ENCODE measurements at regions of chr16 and their contacts with region 1.

Region 1: DNA sequence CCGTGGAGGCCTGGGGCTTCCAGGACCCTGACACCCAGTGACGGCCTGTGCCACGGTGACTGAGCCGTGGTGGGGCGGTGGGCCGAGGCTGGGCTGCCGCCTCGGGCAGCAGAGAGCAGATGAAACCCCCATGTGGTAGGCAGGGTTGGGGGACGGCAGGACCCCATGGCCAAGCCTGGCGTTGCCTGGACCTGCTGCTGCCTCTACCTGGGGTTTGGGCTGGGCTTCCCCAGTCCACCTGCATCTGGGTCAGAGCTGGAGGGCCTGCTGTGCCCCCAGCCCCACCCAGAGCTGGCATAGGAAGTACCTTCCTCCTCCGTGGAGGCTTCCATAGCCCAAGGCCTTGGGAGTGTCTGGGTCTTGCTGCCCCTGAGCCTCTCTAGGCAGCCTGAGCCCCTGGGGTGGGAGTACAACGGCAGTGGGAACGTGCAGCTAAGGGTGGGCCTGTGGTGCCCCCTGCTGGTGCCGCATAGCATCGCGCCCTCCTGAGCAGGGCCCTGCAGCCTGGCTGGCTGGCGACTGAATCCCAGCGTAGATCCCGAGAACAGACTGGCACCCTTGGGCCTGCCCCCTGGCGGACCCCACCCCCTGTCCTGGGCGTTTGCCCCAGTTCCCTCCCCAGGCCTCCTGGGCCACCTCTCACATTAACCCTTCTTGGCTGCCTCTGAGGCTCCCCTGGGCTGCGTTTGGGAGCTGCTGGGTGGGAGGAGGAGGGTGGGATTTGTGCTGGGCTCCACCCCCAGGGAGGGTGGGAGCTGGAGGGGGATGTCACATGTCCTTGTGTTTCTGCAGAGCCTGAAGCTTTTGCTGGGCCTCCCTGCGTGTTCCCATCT is 12.6 kb upstream of the ATP6V0C start:
- DNase-seq: peak; percentile 93
- ATAC-seq: peak; percentile 91
- H3K4me3 Mint-ChIP-seq: peak overlapping the region; percentile 49
- H3K27ac Mint-ChIP-seq: no peak overlapping the region
- H3K4me1 Mint-ChIP-seq: peaks cover 4% of the 10 kb centered on the region
- H3K27me3 Mint-ChIP-seq: no peaks in the 10 kb centered on the region
- CTCF ChIP-seq: peak; percentile 94

Region 2: GRCh38 chr16:2251483-2252240 is 249.5 kb before region 1 on chr16 and contains the start of gene ECI1:
- CTCF ChIA-PET with region 1: interaction called, 18 read pairs
- POLR2A ChIA-PET with region 1: interaction called, 5 read pairs
- DNase-seq: peak; percentile 94
- ATAC-seq: peak; percentile 93
- H3K4me3 Mint-ChIP-seq: peak within 1 kb of the TSS; percentile 92
- H3K27ac Mint-ChIP-seq: peak within 1 kb of the TSS; percentile 98
- H3K4me1 Mint-ChIP-seq: peaks cover 9% of the 10 kb centered on the region
- H3K27me3 Mint-ChIP-seq: no peaks in the 10 kb centered on the region
- CTCF ChIP-seq: peak; percentile 13; the same call in 1 of the 2 replicates
- total RNA-seq, gene ECI1: 100 to 110 TPM (median 106 TPM) in 3 replicates

Region 3: GRCh38 chr16:2429034-2429770 is 71.9 kb before region 1 on chr16 and contains the start of gene CCNF:
- CTCF ChIA-PET with region 1: interaction called, 32 read pairs
- POLR2A ChIA-PET with region 1: no interaction called
- DNase-seq: peak; percentile 99
- ATAC-seq: peak; percentile 92
- H3K4me3 Mint-ChIP-seq: peak within 1 kb of the TSS; percentile 99
- H3K27ac Mint-ChIP-seq: peak within 1 kb of the TSS; percentile 40
- H3K4me1 Mint-ChIP-seq: peaks cover 23% of the 10 kb centered on the region
- H3K27me3 Mint-ChIP-seq: peaks cover 11% of the 10 kb centered on the region
- CTCF ChIP-seq: no peak
- total RNA-seq, gene CCNF: 53.5 to 65.7 TPM (median 54.7 TPM) in 3 replicates

Region 4: DNA sequence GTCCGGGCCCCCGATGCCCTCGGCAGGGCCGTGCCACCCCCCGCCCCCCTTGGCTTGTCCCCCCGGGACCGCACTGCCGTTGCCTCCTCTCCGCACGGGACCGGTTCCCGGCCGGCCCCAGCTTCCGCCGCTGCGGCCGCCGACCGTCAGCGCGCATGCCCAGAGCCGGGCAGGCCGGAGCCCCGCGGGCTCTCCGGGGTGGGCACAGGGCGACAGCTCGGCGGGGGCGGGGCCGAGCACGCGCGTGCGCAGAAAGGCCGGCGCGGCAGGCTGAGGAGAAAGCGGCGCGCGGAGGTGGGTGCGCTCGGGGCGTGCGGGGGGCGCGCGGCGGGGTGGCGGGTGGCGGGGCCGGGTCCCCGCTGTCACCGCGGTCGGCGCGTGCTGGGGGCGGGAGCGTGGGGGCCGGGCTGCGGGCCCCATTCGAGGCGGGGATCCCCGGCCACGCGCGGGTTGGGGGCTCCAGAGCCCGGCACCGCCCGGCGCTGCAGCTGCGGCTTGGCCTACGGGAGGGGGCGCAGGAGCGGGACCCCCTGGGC is 26.2 kb before region 1 on chr16 and contains the start of gene TBC1D24:
- CTCF ChIA-PET with region 1: interaction called, 57 read pairs
- POLR2A ChIA-PET with region 1: interaction called, 3 read pairs
- DNase-seq: peak; percentile 85
- ATAC-seq: peak; percentile 60
- H3K4me3 Mint-ChIP-seq: peak within 1 kb of the TSS; percentile 67
- H3K27ac Mint-ChIP-seq: no peak within 1 kb of the TSS
- H3K4me1 Mint-ChIP-seq: peaks cover 13% of the 10 kb centered on the region
- H3K27me3 Mint-ChIP-seq: peaks cover 34% of the 10 kb centered on the region
- CTCF ChIP-seq: no peak
- total RNA-seq, gene TBC1D24: 17.3 to 21.0 TPM (median 17.8 TPM) in 3 replicates

Region 5: DNA sequence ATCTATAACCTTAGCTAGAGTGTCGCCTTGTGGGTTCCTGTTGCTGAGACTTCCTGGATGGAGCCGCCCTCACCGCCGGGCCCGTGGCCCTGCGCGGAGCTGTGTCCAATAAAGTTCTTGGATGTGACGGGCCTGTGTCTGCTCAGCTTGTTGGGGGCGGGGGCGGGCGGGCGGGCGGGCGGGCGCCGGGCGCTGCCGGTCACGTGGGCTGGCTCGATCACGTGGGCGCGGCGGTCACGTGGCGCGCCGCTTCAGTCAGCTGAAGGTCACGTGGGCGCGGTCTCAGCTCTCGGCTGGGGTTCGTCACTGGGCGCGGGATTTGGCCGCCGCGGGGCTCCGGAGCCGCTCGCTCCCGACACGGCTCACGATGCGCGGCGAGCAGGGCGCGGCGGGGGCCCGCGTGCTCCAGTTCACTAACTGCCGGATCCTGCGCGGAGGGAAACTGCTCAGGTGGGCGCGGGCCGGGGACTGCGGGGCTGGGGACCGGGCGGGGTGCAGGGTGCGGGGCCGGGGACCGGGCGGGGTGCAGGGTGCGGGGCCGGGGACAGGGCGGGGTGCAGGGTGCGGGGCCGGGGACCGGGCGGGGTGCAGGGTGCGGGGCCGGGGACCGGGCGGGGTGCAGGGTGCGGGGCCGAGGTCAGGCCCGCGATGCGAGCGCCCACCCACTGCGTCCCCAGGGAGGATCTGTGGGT is 19.1 kb after region 1 on chr16 and contains the start of gene AMDHD2:
- CTCF ChIA-PET with region 1: interaction called, 13 read pairs
- POLR2A ChIA-PET with region 1: interaction called, 4 read pairs
- DNase-seq: peak; percentile 86
- ATAC-seq: peak; percentile 28
- H3K4me3 Mint-ChIP-seq: peak within 1 kb of the TSS; percentile 75
- H3K27ac Mint-ChIP-seq: peak within 1 kb of the TSS; percentile 97
- H3K4me1 Mint-ChIP-seq: peaks cover 27% of the 10 kb centered on the region
- H3K27me3 Mint-ChIP-seq: no peaks in the 10 kb centered on the region
- CTCF ChIP-seq: no peak
- total RNA-seq, gene AMDHD2: 60.1 to 70.9 TPM (median 60.3 TPM) in 3 replicates